ENCODE measurements at regions of chr6 and their contacts with region 1.

Region 1: GRCh38 chr6:110039364-110039980 is 61.4 kb downstream of the GPR6 start:
- DNase-seq: peak; percentile 73
- ATAC-seq: peak; percentile 87
- H3K4me3 ChIP-seq: peak overlapping the region; percentile 23 to 35 (median 27); a peak in 4 of 6 replicates
- H3K27ac ChIP-seq: no peak overlapping the region
- H3K4me1 ChIP-seq: peaks cover 31% of the 10 kb centered on the region
- H3K27me3 ChIP-seq: peaks cover 0 to 2% of the 10 kb centered on the region in 2 experiments; a peak in 1 of 5 replicates
- CTCF ChIP-seq: peak; percentile 89
- EP300 ChIP-seq: no peak
- POLR2A ChIP-seq: no peak
- RAD21 ChIP-seq: peak; percentile 73

Region 2: DNA sequence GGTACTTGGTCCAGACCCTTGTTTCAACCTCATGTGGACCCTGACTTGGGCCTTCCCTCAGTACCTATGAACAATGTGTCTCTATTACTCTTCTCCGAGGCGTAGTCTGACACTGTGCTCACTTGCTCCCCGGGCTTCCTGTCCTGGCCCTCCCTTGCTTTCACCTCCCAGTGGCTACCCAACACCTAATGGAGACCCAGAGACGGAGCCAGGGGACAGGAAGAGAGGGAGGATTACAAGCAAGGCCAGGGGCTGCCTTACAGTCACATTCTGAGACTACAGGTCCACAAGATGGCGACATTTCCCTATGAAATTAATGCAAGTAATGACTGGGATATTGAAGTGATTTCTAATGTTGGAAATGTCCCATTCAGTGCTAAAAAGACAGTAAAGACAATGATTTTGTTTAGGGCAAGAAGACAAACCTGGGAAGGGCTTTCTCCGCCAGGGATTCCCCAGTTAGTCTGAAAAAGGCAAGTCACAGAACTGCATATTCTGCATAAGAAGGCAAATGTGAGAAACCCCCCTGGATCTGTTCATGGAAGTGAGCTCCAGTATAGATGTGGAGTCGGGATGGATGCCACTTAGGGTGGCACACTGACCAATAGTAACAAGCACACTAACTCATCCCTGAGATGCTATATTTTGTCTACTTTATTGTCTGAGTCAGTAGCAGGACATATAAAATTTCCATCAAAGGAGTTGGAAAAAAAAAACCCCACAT is 512.4 kb before region 1 on chr6:
- CTCF ChIA-PET with region 1: interaction called, 10 read pairs
- POLR2A ChIA-PET with region 1: no interaction called
- in situ Hi-C with region 1: no loop called
- intact Hi-C with region 1: loop called (anchors 1 kb)
- DNase-seq: peak; percentile 65
- ATAC-seq: peak; percentile 97
- H3K4me3 ChIP-seq: no peak overlapping the region; a peak in 1 of 6 replicates
- H3K27ac ChIP-seq: no peak overlapping the region
- H3K4me1 ChIP-seq: no peaks in the 10 kb centered on the region
- H3K27me3 ChIP-seq: no peaks in the 10 kb centered on the region
- CTCF ChIP-seq: peak; percentile 86
- EP300 ChIP-seq: no peak
- POLR2A ChIP-seq: no peak
- RAD21 ChIP-seq: peak; percentile 31; the same call in 1 of the 2 replicates

Region 3: GRCh38 chr6:109660526-109661320 is 378.7 kb before region 1 on chr6:
- CTCF ChIA-PET with region 1: no interaction called
- POLR2A ChIA-PET with region 1: no interaction called
- in situ Hi-C with region 1: no loop called
- intact Hi-C with region 1: no loop called
- DNase-seq: no peak
- ATAC-seq: no peak
- H3K4me3 ChIP-seq: no peak overlapping the region
- H3K27ac ChIP-seq: no peak overlapping the region
- H3K4me1 ChIP-seq: no peaks in the 10 kb centered on the region
- H3K27me3 ChIP-seq: no peaks in the 10 kb centered on the region
- CTCF ChIP-seq: no peak
- EP300 ChIP-seq: no peak
- POLR2A ChIP-seq: no peak
- RAD21 ChIP-seq: no peak

Region 4: GRCh38 chr6:109705258-109705657 is 334.2 kb before region 1 on chr6:
- CTCF ChIA-PET with region 1: interaction called, 113 read pairs
- POLR2A ChIA-PET with region 1: no interaction called
- in situ Hi-C with region 1: loop called (anchors 5 kb)
- intact Hi-C with region 1: loop called (anchors 1 kb)
- DNase-seq: peak; percentile 78
- ATAC-seq: peak; percentile 97
- H3K4me3 ChIP-seq: no peak overlapping the region
- H3K27ac ChIP-seq: no peak overlapping the region
- H3K4me1 ChIP-seq: no peaks in the 10 kb centered on the region
- H3K27me3 ChIP-seq: no peaks in the 10 kb centered on the region
- CTCF ChIP-seq: peak; percentile 96
- EP300 ChIP-seq: no peak
- POLR2A ChIP-seq: no peak
- RAD21 ChIP-seq: peak; percentile 91

Region 5: GRCh38 chr6:109892436-109893435 is 146.7 kb before region 1 on chr6:
- CTCF ChIA-PET with region 1: no interaction called
- POLR2A ChIA-PET with region 1: no interaction called
- in situ Hi-C with region 1: loop called (anchors 10 kb)
- intact Hi-C with region 1: no loop called
- DNase-seq: no peak
- ATAC-seq: peak; percentile 85
- H3K4me3 ChIP-seq: no peak overlapping the region
- H3K27ac ChIP-seq: no peak overlapping the region
- H3K4me1 ChIP-seq: no peaks in the 10 kb centered on the region
- H3K27me3 ChIP-seq: peaks cover 1 to 36% of the 10 kb centered on the region in 2 experiments
- CTCF ChIP-seq: 0 out of 2 replicates have a peak, but pooled peaks have one; percentile 28
- EP300 ChIP-seq: no peak
- POLR2A ChIP-seq: no peak
- RAD21 ChIP-seq: no peak

Region 6: GRCh38 chr6:109991201-109992101 is 48.0 kb before region 1 on chr6:
- CTCF ChIA-PET with region 1: no interaction called
- POLR2A ChIA-PET with region 1: no interaction called
- in situ Hi-C with region 1: no loop called
- intact Hi-C with region 1: no loop called
- DNase-seq: no peak
- ATAC-seq: no peak
- H3K4me3 ChIP-seq: no peak overlapping the region
- H3K27ac ChIP-seq: no peak overlapping the region
- H3K4me1 ChIP-seq: no peaks in the 10 kb centered on the region
- H3K27me3 ChIP-seq: no peaks in the 10 kb centered on the region; a peak in 2 of 5 replicates
- CTCF ChIP-seq: no peak
- EP300 ChIP-seq: no peak
- POLR2A ChIP-seq: no peak
- RAD21 ChIP-seq: no peak

Region 7: GRCh38 chr6:110398778-110399177 is 359.3 kb after region 1 on chr6:
- CTCF ChIA-PET with region 1: no interaction called
- POLR2A ChIA-PET with region 1: no interaction called
- in situ Hi-C with region 1: loop called (anchors 10 kb)
- intact Hi-C with region 1: no loop called
- DNase-seq: no peak
- ATAC-seq: no peak
- H3K4me3 ChIP-seq: no peak overlapping the region
- H3K27ac ChIP-seq: no peak overlapping the region
- H3K4me1 ChIP-seq: no peaks in the 10 kb centered on the region
- H3K27me3 ChIP-seq: no peaks in the 10 kb centered on the region
- CTCF ChIP-seq: no peak
- EP300 ChIP-seq: no peak
- POLR2A ChIP-seq: no peak
- RAD21 ChIP-seq: no peak